SK-N-SH (cell line): ENCODE measurements at regions of chr18 and their contacts with region 1.

Region 1: GRCh38 chr18:13216092-13216582 is 2.4 kb upstream of the LDLRAD4 start:
- DNase-seq: peak; percentile 81
- H3K4me3 ChIP-seq: no peak overlapping the region
- H3K27ac ChIP-seq: peak overlapping the region in 1 of 2 experiments; percentile 25; a peak in 2 of 4 replicates
- H3K4me1 ChIP-seq: peaks cover 0 to 20% of the 10 kb centered on the region in 2 experiments; a peak in 2 of 4 replicates
- H3K27me3 ChIP-seq: peaks cover 23% of the 10 kb centered on the region; the same call in 1 of the 2 replicates
- CTCF ChIP-seq: peak; percentile 73
- EP300 ChIP-seq: no peak
- RAD21 ChIP-seq: peak; percentile 93

Region 2: GRCh38 chr18:13112982-13113381 is 103.2 kb before region 1 on chr18:
- CTCF ChIA-PET with region 1: interaction called, 15 read pairs
- POLR2A ChIA-PET with region 1: interaction called, 3 read pairs
- DNase-seq: peak; percentile 84
- H3K4me3 ChIP-seq: no peak overlapping the region
- H3K27ac ChIP-seq: peak overlapping the region in 1 of 2 experiments; percentile 76; a peak in 2 of 4 replicates
- H3K4me1 ChIP-seq: peaks cover 0 to 11% of the 10 kb centered on the region in 2 experiments; a peak in 1 of 4 replicates
- H3K27me3 ChIP-seq: no peaks in the 10 kb centered on the region
- CTCF ChIP-seq: peak; percentile 49
- EP300 ChIP-seq: no peak; a peak in 1 of 4 replicates
- RAD21 ChIP-seq: peak; percentile 86

Region 3: DNA sequence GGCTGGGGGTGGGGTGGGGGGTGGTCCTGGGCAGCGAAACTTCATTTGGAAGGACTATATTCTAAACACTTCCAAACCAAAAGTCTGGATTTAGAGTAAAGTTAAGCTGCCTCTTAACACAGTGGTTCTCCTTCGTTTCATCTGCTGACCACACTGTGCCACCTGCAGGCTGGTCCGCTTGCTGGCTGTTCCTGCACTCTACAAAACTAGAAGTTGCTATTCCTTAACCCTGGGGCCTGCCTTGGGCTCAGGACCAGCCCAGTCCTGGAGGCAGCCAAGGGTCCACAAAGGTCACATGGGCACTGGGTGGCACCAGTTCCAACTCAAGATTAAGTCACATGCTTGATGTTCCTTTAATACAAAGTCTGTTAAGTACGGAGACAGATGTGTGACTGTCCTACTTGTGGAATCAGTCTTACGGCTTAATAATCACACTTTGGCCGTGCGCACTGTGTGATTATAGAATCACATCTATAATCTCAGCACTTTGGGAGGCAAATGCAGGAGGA is 314.8 kb after region 1 on chr18:
- CTCF ChIA-PET with region 1: interaction called, 85 read pairs
- POLR2A ChIA-PET with region 1: no interaction called
- DNase-seq: peak; percentile 43
- H3K4me3 ChIP-seq: no peak overlapping the region
- H3K27ac ChIP-seq: no peak overlapping the region
- H3K4me1 ChIP-seq: peaks cover 0 to 7% of the 10 kb centered on the region in 2 experiments; a peak in 1 of 4 replicates
- H3K27me3 ChIP-seq: 0 out of 2 replicates have a peak, but pooled peaks cover 4% of the 10 kb centered on the region
- CTCF ChIP-seq: peak; percentile 70
- EP300 ChIP-seq: no peak
- RAD21 ChIP-seq: peak; percentile 74